Activated T-helper 1 cell treated with anti-CD3 and anti-CD28 coated beads, Interleukin-12 subunit alpha, Interleukin-12 subunit beta, Interleukin-2, Interleukin-4 antibody, amounts not matched to agents 30 ng/mL and 10 ng/mL and 1 ng/mL, durations not matched to agents 14 hours and 24 hours and 36 hours (primary cell): ENCODE measurements at regions of chrX and their contacts with region 1.

Region 1: DNA sequence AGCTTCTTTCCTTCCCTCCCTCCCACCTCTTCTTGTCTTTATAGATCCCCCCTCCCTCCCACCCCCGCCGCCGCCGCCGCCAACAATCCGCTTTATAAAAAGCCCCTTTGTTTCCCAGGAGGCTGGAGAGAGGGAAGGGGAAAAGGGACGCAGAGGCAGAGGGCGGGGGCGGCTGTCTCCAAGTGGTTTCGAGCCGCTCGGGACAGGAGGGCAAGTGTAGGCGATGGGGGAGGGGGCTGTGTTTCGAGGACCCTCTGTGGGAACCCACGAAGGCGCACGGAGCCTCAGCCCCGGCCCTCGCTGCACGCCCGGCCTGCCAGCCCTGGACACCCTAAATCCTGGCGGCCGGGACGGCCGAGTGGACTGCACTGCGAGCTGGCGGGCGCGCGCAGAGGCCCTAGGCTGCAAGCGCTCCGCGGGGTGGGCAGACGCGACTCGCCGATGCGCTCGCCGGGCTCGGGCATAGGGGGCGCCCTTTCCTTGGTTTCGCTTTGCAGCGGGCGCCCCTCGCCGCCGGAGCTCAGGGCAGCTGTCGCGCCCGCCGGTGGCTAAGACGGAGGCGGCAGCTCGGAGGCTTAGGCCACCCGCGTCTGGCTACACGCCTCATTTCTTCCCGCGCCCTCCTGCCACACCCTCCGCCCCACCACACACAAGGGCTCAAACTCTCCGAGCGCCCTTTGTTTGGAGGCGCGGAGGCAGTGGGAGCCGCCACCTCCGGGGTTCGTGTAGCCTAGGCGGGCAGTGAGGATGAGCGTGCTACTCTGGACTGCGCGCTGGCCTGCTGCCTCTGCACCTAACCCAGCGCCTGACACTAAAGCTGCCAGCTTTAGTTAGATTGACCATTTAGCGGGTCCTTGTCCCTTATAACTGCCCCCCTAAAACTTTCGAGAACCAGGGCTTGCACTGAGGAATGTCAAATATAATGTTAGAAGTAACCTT is 2.2 kb downstream of the MAMLD1 start:
- DNase-seq: peak; percentile 70
- H3K4me3 Mint-ChIP-seq: peak overlapping the region; percentile 83
- H3K27ac Mint-ChIP-seq: peak overlapping the region; percentile 87
- H3K4me1 Mint-ChIP-seq: peaks cover 30% of the 10 kb centered on the region
- H3K27me3 Mint-ChIP-seq: peaks cover 3% of the 10 kb centered on the region

Region 2: DNA sequence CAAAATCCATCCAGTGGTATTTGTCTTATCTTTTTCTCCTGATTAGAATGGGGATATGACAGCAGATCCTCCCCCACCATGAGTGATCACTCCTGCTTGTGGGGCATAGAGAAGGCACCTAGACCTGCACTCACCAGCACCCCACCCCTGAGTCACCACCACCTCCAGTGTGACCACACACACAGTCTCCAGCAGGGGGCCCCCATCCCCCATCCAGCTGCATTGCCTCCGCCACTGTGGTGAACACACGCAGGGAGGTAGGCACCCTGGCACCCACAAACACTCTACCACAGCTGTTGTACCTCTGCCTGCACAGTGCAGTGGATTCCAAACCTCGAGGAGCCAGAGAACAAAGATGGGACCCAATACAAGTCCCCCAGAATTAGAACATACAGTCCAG is 493.4 kb before region 1 on chrX:
- intact Hi-C with region 1: loop called (anchors 10 kb)
- DNase-seq: peak; percentile 52
- H3K4me3 Mint-ChIP-seq: no peak overlapping the region
- H3K27ac Mint-ChIP-seq: no peak overlapping the region
- H3K4me1 Mint-ChIP-seq: peaks cover 14% of the 10 kb centered on the region
- H3K27me3 Mint-ChIP-seq: peaks cover 18% of the 10 kb centered on the region

Region 3: DNA sequence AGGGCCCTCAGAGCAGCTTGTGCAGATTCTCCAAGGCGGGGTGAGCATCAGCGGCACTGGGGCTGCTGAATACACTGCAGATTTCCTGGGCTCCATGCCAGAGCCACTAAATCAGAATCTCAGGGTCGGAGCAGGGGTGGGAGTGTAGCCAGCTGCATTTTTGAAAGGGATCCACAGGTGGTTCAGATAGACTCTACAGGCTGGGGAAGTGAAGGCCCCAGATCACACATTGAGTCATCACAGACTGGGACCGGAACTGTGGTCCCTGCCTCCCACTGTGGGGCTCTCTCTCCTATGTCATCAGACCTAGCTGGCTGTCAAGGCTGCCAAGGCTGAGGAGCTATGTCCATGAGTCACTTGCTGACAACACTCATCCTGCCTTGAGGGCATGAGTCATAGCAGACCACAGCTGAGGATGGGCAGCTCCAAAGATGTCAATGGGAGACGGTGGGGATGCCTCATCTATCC is 164.5 kb before region 1 on chrX:
- intact Hi-C with region 1: loop called (anchors 5 kb)
- DNase-seq: peak; percentile 40
- H3K4me3 Mint-ChIP-seq: peak overlapping the region; percentile 26
- H3K27ac Mint-ChIP-seq: no peak overlapping the region
- H3K4me1 Mint-ChIP-seq: peaks cover 10% of the 10 kb centered on the region
- H3K27me3 Mint-ChIP-seq: peaks cover 2% of the 10 kb centered on the region

Region 4: DNA sequence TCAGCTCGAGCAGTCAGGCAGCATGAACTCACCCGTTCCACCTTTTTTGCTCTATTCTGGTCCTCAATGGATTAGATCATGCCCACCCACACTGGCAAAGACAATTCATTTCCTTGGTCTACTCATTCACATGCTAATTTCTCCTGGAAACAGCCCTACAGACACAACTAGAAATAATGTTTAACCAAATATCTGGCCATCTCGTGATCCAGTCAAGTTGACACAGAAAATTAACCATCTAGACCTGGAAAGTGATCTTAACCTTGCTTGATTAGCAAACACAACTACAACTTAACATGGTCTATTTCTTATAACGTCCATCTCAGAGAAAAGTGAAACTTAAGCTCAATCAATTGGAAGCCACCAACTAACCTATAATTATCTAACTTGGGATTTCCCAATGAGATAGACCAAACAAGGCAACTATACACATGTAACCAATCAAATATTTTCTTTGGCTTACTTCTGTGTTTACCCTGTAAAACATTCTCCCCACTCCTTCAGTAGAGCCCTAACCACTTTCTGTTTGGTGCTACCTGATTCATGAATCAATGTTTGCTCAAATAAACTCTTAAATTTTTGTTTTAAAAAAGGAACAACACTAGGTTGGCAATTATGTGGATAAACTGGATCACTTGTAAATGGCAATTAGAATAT is 71.8 kb before region 1 on chrX:
- intact Hi-C with region 1: no loop called
- DNase-seq: no peak
- H3K4me3 Mint-ChIP-seq: no peak overlapping the region
- H3K27ac Mint-ChIP-seq: no peak overlapping the region
- H3K4me1 Mint-ChIP-seq: no peaks in the 10 kb centered on the region
- H3K27me3 Mint-ChIP-seq: peaks cover 2% of the 10 kb centered on the region

Region 5: GRCh38 chrX:150478496-150479492 is 113.5 kb after region 1 on chrX:
- intact Hi-C with region 1: loop called (anchors 1 kb)
- DNase-seq: peak; percentile 21
- H3K4me3 Mint-ChIP-seq: peak overlapping the region; percentile 66
- H3K27ac Mint-ChIP-seq: peak overlapping the region; percentile 95
- H3K4me1 Mint-ChIP-seq: peaks cover 75% of the 10 kb centered on the region
- H3K27me3 Mint-ChIP-seq: no peaks in the 10 kb centered on the region

Region 6: GRCh38 chrX:150575416-150575808 is 210.1 kb after region 1 on chrX:
- intact Hi-C with region 1: loop called (anchors 2 kb)
- DNase-seq: peak; percentile 16
- H3K4me3 Mint-ChIP-seq: peak overlapping the region; percentile 76
- H3K27ac Mint-ChIP-seq: peak overlapping the region; percentile 93
- H3K4me1 Mint-ChIP-seq: peaks cover 80% of the 10 kb centered on the region
- H3K27me3 Mint-ChIP-seq: no peaks in the 10 kb centered on the region

Region 7: GRCh38 chrX:150693775-150694574 is 328.7 kb after region 1 on chrX:
- intact Hi-C with region 1: loop called (anchors 2 kb)
- DNase-seq: peak; percentile 66
- H3K4me3 Mint-ChIP-seq: peak overlapping the region; percentile 91
- H3K27ac Mint-ChIP-seq: peak overlapping the region; percentile 97
- H3K4me1 Mint-ChIP-seq: peaks cover 65% of the 10 kb centered on the region
- H3K27me3 Mint-ChIP-seq: no peaks in the 10 kb centered on the region